GM10248 (cell line): ENCODE measurements at regions of chr4 and their contacts with region 1.

Region 1: GRCh38 chr4:48016141-48017103 is at the starts of genes CNGA1 and NIPAL1:
- DNase-seq: peak; percentile 88
- CTCF ChIP-seq: peak; percentile 59

Region 2: DNA sequence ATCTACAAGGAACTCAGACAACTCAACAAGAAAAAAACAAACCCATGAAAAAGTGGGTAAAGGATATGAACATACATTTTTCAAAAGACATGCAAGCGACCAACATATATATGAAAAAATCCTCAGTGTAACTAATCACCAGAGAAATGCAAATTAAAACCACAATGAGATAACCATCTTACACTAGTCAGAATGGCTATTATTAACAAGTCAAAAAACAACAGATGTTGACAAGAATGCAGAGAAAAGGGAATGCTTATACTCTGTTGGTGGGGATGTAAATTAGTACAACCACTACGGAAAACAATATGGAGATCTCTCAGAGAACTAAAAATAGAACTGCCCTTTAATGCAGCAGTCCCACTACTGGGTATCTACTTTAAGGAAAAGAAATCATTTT is 12.3 kb after region 1 on chr4:
- CTCF ChIA-PET with region 1: interaction called, 33 read pairs
- POLR2A ChIA-PET with region 1: no interaction called
- DNase-seq: no peak
- CTCF ChIP-seq: no peak

Region 3: GRCh38 chr4:48129307-48130014 is 113.0 kb after region 1 on chr4:
- CTCF ChIA-PET with region 1: no interaction called
- POLR2A ChIA-PET with region 1: no interaction called
- DNase-seq: peak; percentile 21
- CTCF ChIP-seq: no peak